ENCODE measurements at regions of chr6 and their contacts with region 1.

Region 1: GRCh38 chr6:82371799-82372546 is 8.4 kb downstream of the TPBG start:
- DNase-seq: peak; percentile 24
- ATAC-seq: peak; percentile 48
- H3K4me3 ChIP-seq: no peak overlapping the region
- H3K27ac ChIP-seq: peak overlapping the region; percentile 39
- H3K4me1 ChIP-seq: peaks cover 17% of the 10 kb centered on the region
- H3K27me3 ChIP-seq: no peaks in the 10 kb centered on the region
- CTCF ChIP-seq: no peak

Region 2: GRCh38 chr6:82541306-82541705 is 169.3 kb after region 1 on chr6:
- CTCF ChIA-PET with region 1: no interaction called
- POLR2A ChIA-PET with region 1: interaction called, 10 read pairs
- intact Hi-C with region 1: loop called (anchors 10 kb)
- DNase-seq: no peak
- ATAC-seq: no peak
- H3K4me3 ChIP-seq: no peak overlapping the region
- H3K27ac ChIP-seq: no peak overlapping the region
- H3K4me1 ChIP-seq: 0 out of 2 replicates have a peak, but pooled peaks cover 5% of the 10 kb centered on the region
- H3K27me3 ChIP-seq: no peaks in the 10 kb centered on the region
- CTCF ChIP-seq: no peak

Measured in PC-3 (cell line).